ENCODE measurements at regions of chr14 and their contacts with region 1.

Region 1: GRCh38 chr14:99480917-99481744 is at the start of gene CCNK:
- DNase-seq: peak; percentile 100
- ATAC-seq: peak; percentile 84 to 95 (median 85)
- H3K4me3 ChIP-seq: peak within 1 kb of the TSS; percentile 94
- H3K4me3 Mint-ChIP-seq: peak within 1 kb of the TSS; percentile 97
- H3K27ac ChIP-seq: peak within 1 kb of the TSS; percentile 94
- H3K27ac Mint-ChIP-seq: peak within 1 kb of the TSS; percentile 96 to 97
- H3K4me1 ChIP-seq: peaks cover 21% of the 10 kb centered on the region
- H3K4me1 Mint-ChIP-seq: peaks cover 72 to 82% of the 10 kb centered on the region in 2 donors
- H3K27me3 ChIP-seq: no peaks in the 10 kb centered on the region
- H3K27me3 Mint-ChIP-seq: no peaks in the 10 kb centered on the region
- CTCF ChIP-seq: no peak
- total RNA-seq, gene CCNK: 155 to 168 (median 165) TPM

Region 2: DNA sequence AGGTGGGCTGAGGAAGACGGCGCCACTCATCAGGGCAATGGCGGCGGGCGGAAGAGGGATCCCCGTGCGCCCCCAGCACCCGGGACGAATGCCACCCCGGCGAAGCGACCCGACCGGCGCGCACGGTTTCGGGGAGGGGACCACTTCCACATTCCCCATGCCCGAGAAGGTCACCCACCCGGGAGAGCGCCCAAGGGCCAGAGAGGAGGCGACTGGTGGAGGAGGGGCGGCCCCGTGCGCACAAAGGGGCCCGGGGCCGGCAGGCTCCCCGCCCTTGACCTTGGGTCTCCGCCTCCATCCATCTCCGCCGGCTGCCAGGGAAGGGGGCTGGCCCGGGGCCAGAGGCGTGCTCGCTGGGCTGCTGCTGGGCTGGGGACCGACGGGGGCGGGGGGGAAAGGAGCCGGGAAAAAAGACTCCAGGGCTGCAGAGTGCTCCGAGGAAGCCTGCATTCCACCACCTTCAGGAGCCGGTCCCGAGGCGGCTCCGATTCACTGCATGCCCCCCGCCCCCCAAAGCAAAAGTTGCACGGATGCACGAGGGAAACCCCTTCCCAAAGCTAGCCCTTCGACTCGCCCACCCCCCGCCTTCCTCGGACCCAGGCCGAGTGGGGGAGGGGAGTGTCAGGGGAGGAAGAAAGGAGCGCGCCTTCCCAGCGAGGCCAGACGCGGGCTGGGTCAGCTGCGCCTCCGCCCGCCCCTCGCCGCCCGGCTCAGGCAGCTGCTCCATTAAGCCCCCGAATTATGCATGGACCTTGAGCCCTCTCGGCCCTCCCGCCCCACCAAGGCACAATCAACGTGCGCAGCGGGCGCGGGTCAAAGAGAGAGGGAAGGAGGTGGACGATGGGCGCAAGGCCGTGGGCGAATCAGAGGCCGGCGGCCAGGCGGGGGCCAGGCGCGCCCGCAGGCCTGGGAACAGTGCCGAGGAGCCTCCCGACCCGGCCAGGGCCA is 235.3 kb before region 1 on chr14:
- intact Hi-C with region 1: no loop called
- DNase-seq: peak in 1 of 2 donors; percentile 59
- ATAC-seq: peak in 1 of 3 donors; percentile 3
- H3K4me3 ChIP-seq: no peak overlapping the region
- H3K4me3 Mint-ChIP-seq: peak overlapping the region; percentile 75
- H3K27ac ChIP-seq: peak overlapping the region; percentile 44
- H3K27ac Mint-ChIP-seq: peak overlapping the region in 1 of 2 donors; percentile 96
- H3K4me1 ChIP-seq: peaks cover 84% of the 10 kb centered on the region
- H3K4me1 Mint-ChIP-seq: peaks cover 79 to 83% of the 10 kb centered on the region in 2 donors
- H3K27me3 ChIP-seq: no peaks in the 10 kb centered on the region
- H3K27me3 Mint-ChIP-seq: no peaks in the 10 kb centered on the region
- CTCF ChIP-seq: no peak

Region 3: GRCh38 chr14:99436247-99437180 is 44.6 kb before region 1 on chr14:
- intact Hi-C with region 1: loop called (anchors 2 kb)
- DNase-seq: peak in 1 of 2 donors; percentile 32
- ATAC-seq: peak; percentile 85 to 92 (median 90)
- H3K4me3 ChIP-seq: no peak overlapping the region
- H3K4me3 Mint-ChIP-seq: peak overlapping the region; percentile 70
- H3K27ac ChIP-seq: peak overlapping the region; percentile 77
- H3K27ac Mint-ChIP-seq: peak overlapping the region; percentile 81 to 92
- H3K4me1 ChIP-seq: peaks cover 58% of the 10 kb centered on the region
- H3K4me1 Mint-ChIP-seq: peaks cover 67 to 77% of the 10 kb centered on the region in 2 donors
- H3K27me3 ChIP-seq: no peaks in the 10 kb centered on the region
- H3K27me3 Mint-ChIP-seq: no peaks in the 10 kb centered on the region
- CTCF ChIP-seq: no peak

Region 4: GRCh38 chr14:99579903-99580570 is 98.9 kb after region 1 on chr14:
- intact Hi-C with region 1: no loop called
- DNase-seq: no peak
- ATAC-seq: no peak
- H3K4me3 ChIP-seq: no peak overlapping the region
- H3K4me3 Mint-ChIP-seq: no peak overlapping the region
- H3K27ac ChIP-seq: no peak overlapping the region
- H3K27ac Mint-ChIP-seq: no peak overlapping the region
- H3K4me1 ChIP-seq: no peaks in the 10 kb centered on the region
- H3K4me1 Mint-ChIP-seq: no peaks in the 10 kb centered on the region
- H3K27me3 ChIP-seq: no peaks in the 10 kb centered on the region
- H3K27me3 Mint-ChIP-seq: no peaks in the 10 kb centered on the region
- CTCF ChIP-seq: no peak

Region 5: GRCh38 chr14:99604283-99604765 is 123.2 kb after region 1 on chr14:
- intact Hi-C with region 1: loop called (anchors 2 kb)
- DNase-seq: peak; percentile 96 to 97
- ATAC-seq: peak; percentile 93 to 98 (median 94)
- H3K4me3 ChIP-seq: peak overlapping the region; percentile 92
- H3K4me3 Mint-ChIP-seq: peak overlapping the region; percentile 95
- H3K27ac ChIP-seq: peak overlapping the region; percentile 77
- H3K27ac Mint-ChIP-seq: peak overlapping the region; percentile 79 to 85
- H3K4me1 ChIP-seq: peaks cover 26% of the 10 kb centered on the region
- H3K4me1 Mint-ChIP-seq: peaks cover 13 to 23% of the 10 kb centered on the region in 2 donors
- H3K27me3 ChIP-seq: no peaks in the 10 kb centered on the region
- H3K27me3 Mint-ChIP-seq: no peaks in the 10 kb centered on the region
- CTCF ChIP-seq: no peak

Region 6: GRCh38 chr14:99683619-99684355 is 202.7 kb after region 1 on chr14 and contains the start of gene CYP46A1:
- intact Hi-C with region 1: loop called (anchors 1 kb)
- DNase-seq: peak; percentile 99 to 100
- ATAC-seq: peak; percentile 93 to 99 (median 93)
- H3K4me3 ChIP-seq: peak within 1 kb of the TSS; percentile 91
- H3K4me3 Mint-ChIP-seq: peak within 1 kb of the TSS; percentile 93
- H3K27ac ChIP-seq: peak within 1 kb of the TSS; percentile 85
- H3K27ac Mint-ChIP-seq: peak within 1 kb of the TSS; percentile 82 to 91
- H3K4me1 ChIP-seq: peaks cover 16% of the 10 kb centered on the region
- H3K4me1 Mint-ChIP-seq: peaks cover 7 to 27% of the 10 kb centered on the region in 2 donors
- H3K27me3 ChIP-seq: peaks cover 7% of the 10 kb centered on the region
- H3K27me3 Mint-ChIP-seq: peaks cover 29 to 32% of the 10 kb centered on the region in 2 donors
- CTCF ChIP-seq: no peak
- total RNA-seq, gene CYP46A1: 0.09 to 0.45 (median 0.09) TPM